Heart left ventricle (tissue), 16 donors: ENCODE measurements at regions of chr12 and their contacts with region 1.

Region 1: DNA sequence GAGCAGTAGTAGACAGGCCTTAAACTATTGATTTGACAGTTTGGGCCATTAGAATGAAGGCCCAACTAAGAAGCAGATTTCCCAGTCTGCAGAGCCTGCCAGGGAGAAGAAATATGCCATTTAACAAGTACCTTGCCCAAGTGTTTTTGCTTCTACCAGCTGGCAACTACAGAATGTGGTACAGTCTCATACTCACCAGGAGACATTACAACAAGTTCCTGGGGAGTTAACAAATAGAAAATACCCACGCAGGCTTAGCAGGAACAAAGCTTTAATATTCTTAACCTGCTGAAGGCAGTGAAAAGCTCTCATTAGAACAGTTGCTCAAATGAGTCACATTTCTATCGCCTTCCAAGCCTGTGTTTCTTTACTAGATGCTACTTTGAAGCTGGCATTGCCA is 241.0 kb downstream of the TMEM117 start:
- DNase-seq: no peak
- ATAC-seq: no peak
- H3K4me3 ChIP-seq: no peak overlapping the region
- H3K27ac ChIP-seq: no peak overlapping the region
- H3K4me1 ChIP-seq: no peaks in the 10 kb centered on the region
- H3K27me3 ChIP-seq: no peaks in the 10 kb centered on the region
- CTCF ChIP-seq: no peak
- POLR2A ChIP-seq: no peak

Region 2: GRCh38 chr12:43912859-43913258 is 164.0 kb before region 1 on chr12:
- intact Hi-C with region 1: no loop called
- DNase-seq: no peak
- ATAC-seq: no peak
- H3K4me3 ChIP-seq: no peak overlapping the region
- H3K27ac ChIP-seq: no peak overlapping the region
- H3K4me1 ChIP-seq: peaks cover 0 to 6% (median 0%) of the 10 kb centered on the region in 12 donors
- H3K27me3 ChIP-seq: no peaks in the 10 kb centered on the region
- CTCF ChIP-seq: no peak
- POLR2A ChIP-seq: no peak

Region 3: DNA sequence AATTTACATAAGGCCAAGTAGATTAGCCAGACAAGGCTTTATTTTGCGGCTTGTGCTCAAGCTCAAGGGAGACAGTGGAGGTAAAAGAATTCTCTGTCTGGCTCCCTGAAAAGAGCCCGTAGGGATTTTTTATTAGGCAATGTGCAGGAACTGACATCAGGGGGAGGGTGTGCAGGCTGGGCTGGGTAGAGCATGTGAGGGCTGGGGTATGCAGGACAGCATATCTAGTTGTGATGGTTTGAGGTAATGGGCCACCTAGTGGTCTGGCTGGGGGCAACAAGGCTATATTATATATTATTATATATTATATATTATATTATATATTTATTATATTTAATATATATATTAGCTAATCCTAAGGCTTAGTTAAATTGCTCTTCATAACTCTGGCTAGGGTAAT is 138.9 kb before region 1 on chr12:
- intact Hi-C with region 1: no loop called
- DNase-seq: no peak
- ATAC-seq: no peak
- H3K4me3 ChIP-seq: no peak overlapping the region
- H3K27ac ChIP-seq: no peak overlapping the region
- H3K4me1 ChIP-seq: no peaks in the 10 kb centered on the region
- H3K27me3 ChIP-seq: no peaks in the 10 kb centered on the region
- CTCF ChIP-seq: peak in 4 of 12 donors; percentile 9 to 16 (median 12)
- POLR2A ChIP-seq: no peak

Region 4: DNA sequence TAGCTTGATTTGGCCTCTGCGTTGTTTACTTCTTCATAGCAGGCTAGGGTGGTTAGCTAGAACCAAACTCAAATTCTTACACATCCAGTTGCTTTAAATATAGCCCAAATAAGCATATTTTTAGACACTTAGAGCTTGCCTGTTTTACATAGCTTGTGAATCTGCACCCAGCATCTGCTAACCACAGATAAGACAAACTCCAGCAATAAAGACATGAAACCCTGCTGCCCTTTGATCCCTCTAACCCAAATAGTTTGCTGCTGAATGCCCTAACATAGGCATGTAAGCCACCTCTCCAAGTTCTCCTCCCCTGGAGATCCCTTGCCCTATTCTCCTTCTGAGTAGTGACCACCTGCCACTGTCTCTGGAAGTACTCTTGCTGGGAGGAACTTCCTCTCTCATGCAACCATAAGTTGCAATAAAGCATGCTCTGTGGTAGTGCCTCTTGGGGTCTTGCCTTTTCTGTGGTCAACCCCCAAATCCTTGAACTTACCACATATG is 55.4 kb before region 1 on chr12:
- intact Hi-C with region 1: no loop called
- DNase-seq: no peak
- ATAC-seq: no peak
- H3K4me3 ChIP-seq: no peak overlapping the region
- H3K27ac ChIP-seq: no peak overlapping the region
- H3K4me1 ChIP-seq: no peaks in the 10 kb centered on the region
- H3K27me3 ChIP-seq: no peaks in the 10 kb centered on the region
- CTCF ChIP-seq: no peak
- POLR2A ChIP-seq: no peak

Region 5: GRCh38 chr12:44053550-44054243 is 23.2 kb before region 1 on chr12:
- intact Hi-C with region 1: loop called in 1 of 10 experiments (anchors 2 kb)
- DNase-seq: peak in 2 of 5 donors; percentile 10 to 17
- ATAC-seq: peak in 3 of 4 donors; percentile 18 to 43 (median 20)
- H3K4me3 ChIP-seq: no peak overlapping the region
- H3K27ac ChIP-seq: peak overlapping the region in 2 of 12 donors; percentile 2 to 29
- H3K4me1 ChIP-seq: peaks cover 0 to 19% (median 1%) of the 10 kb centered on the region in 12 donors
- H3K27me3 ChIP-seq: no peaks in the 10 kb centered on the region
- CTCF ChIP-seq: no peak
- POLR2A ChIP-seq: no peak